Activated CD4-positive, alpha-beta memory T cell treated with anti-CD3 and anti-CD28 coated beads for 36 hours (primary cell): ENCODE measurements at regions of chr10 and their contacts with region 1.

Region 1: DNA sequence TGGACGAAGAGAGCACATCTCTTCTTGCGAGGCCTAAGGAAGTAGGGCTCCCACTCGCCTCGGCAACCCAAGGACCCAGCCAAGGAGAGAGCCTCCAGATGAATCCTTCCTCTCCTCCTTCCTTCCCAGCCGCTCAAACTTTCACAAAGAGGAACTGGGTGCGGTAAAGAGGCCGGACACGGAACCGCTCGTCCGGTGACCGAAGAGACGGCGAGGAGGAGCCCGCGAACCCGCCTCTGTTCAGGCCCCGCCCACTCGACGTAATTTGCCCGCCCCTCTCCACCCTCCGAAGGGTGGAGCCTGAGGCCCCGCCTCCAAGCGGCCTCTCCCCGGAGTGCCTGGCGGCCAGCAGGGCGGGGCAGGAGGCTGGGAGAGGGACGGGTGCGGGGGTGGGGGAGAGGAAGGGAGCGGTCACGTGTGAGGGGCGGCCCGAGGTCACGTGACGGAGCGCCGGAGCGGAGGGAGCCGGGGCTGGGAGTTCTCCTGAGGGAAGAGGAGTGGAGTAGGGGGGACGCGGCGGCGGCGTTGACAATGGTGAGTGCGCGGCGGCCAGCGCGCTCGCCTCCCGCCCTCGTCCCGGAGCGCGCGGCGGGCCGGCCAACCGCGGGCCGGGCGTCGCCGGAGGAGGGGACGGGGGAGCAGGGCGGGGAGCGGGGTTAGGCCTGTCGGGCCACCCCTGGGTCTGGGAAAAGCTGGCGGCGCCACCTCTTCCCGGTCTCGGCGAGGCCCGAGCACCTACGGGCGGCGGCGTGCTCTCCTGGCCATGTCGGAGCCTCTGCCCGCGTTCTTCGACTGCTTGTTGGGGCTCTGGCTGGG is at the start of gene VPS26A:
- DNase-seq: peak; percentile 99
- H3K4me3 Mint-ChIP-seq: peak within 1 kb of the TSS; percentile 88
- H3K27ac Mint-ChIP-seq: peak within 1 kb of the TSS; percentile 92
- H3K4me1 Mint-ChIP-seq: peaks cover 25% of the 10 kb centered on the region
- H3K27me3 Mint-ChIP-seq: no peaks in the 10 kb centered on the region
- total RNA-seq, gene VPS26A: 44.6 to 51.4 TPM

Region 2: GRCh38 chr10:68955832-68956532 is 168.0 kb before region 1 on chr10 and contains the start of gene DDX21:
- CTCF ChIA-PET with region 1: no interaction called
- POLR2A ChIA-PET with region 1: interaction called, 7 read pairs
- intact Hi-C with region 1: loop called (anchors 1 kb)
- DNase-seq: peak; percentile 94
- H3K4me3 Mint-ChIP-seq: peak within 1 kb of the TSS; percentile 97
- H3K27ac Mint-ChIP-seq: peak within 1 kb of the TSS; percentile 99
- H3K4me1 Mint-ChIP-seq: peaks cover 39% of the 10 kb centered on the region
- H3K27me3 Mint-ChIP-seq: no peaks in the 10 kb centered on the region
- total RNA-seq, gene DDX21: 156 to 158 TPM

Region 3: DNA sequence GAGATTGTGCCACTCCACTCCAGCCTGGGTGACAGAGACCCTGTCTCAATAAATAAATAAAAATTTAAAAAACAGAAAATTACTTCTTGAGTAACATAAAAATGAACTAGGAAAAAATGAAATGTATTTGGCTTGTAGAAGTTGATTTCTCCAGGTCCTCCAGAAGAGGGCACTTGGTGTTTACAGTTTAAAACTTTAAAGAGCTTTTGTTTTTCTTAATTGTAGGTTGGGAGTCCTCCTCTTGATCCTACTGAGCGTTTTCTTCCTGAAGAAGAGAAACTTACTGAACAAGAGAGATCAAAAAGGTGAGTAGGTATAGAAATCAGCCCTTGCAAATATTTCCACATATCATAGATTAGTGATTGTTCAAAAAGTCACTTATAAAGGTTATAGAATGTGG is 119.1 kb before region 1 on chr10:
- CTCF ChIA-PET with region 1: interaction called, 25 read pairs
- POLR2A ChIA-PET with region 1: interaction called, 4 read pairs
- intact Hi-C with region 1: loop called (anchors 1 kb)
- DNase-seq: no peak
- H3K4me3 Mint-ChIP-seq: no peak overlapping the region
- H3K27ac Mint-ChIP-seq: no peak overlapping the region
- H3K4me1 Mint-ChIP-seq: peaks cover 15% of the 10 kb centered on the region
- H3K27me3 Mint-ChIP-seq: no peaks in the 10 kb centered on the region

Region 4: GRCh38 chr10:69168493-69168892 is 44.5 kb after region 1 on chr10:
- CTCF ChIA-PET with region 1: no interaction called
- POLR2A ChIA-PET with region 1: no interaction called
- intact Hi-C with region 1: no loop called
- DNase-seq: no peak
- H3K4me3 Mint-ChIP-seq: no peak overlapping the region
- H3K27ac Mint-ChIP-seq: no peak overlapping the region
- H3K4me1 Mint-ChIP-seq: peaks cover 2% of the 10 kb centered on the region
- H3K27me3 Mint-ChIP-seq: no peaks in the 10 kb centered on the region

Region 5: GRCh38 chr10:69179743-69180524 is 56.0 kb after region 1 on chr10 and contains the start of gene SUPV3L1:
- CTCF ChIA-PET with region 1: no interaction called
- POLR2A ChIA-PET with region 1: no interaction called
- intact Hi-C with region 1: loop called (anchors 1 kb)
- DNase-seq: peak; percentile 91
- H3K4me3 Mint-ChIP-seq: peak within 1 kb of the TSS; percentile 87
- H3K27ac Mint-ChIP-seq: peak within 1 kb of the TSS; percentile 100
- H3K4me1 Mint-ChIP-seq: peaks cover 45% of the 10 kb centered on the region
- H3K27me3 Mint-ChIP-seq: no peaks in the 10 kb centered on the region
- total RNA-seq, gene SUPV3L1: 45.0 to 47.6 TPM

Region 6: DNA sequence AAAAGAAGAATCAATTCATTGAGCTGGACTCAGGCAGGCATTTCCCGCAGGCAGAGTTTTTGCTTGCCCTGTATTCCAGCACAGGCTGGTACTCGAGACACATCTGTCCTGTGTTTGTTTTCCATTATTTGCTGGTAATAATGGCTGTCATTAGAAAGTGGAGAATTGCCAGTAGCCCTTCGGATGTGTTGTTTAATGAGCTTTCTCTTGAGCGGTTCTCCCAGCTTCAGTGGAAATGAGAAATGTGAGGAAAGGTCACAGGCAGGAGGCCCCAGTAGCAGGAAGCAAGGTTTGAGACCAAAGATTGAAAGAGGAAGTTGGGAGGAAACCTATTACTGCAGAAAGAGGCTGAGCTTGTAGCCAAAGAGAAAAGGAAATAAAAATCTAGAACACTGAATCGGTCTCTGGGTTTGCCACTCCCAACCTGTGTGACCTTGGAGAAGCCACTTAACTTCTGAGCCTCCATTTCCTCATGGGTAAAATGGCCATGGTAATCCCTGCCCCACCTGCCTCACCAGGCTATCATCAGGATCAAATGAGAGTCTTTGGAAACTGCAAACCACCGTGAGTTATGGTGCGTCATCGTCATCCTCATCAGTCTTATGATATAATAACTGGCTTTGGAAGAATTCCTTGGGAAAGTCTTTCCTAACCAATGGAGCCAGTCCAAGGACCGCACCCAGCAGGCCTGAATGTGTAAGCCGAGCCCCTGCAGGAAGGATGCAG is 225.0 kb after region 1 on chr10:
- CTCF ChIA-PET with region 1: no interaction called
- POLR2A ChIA-PET with region 1: no interaction called
- intact Hi-C with region 1: no loop called
- DNase-seq: no peak
- H3K4me3 Mint-ChIP-seq: no peak overlapping the region
- H3K27ac Mint-ChIP-seq: peak overlapping the region; percentile 81
- H3K4me1 Mint-ChIP-seq: peaks cover 70% of the 10 kb centered on the region
- H3K27me3 Mint-ChIP-seq: no peaks in the 10 kb centered on the region

Region 7: DNA sequence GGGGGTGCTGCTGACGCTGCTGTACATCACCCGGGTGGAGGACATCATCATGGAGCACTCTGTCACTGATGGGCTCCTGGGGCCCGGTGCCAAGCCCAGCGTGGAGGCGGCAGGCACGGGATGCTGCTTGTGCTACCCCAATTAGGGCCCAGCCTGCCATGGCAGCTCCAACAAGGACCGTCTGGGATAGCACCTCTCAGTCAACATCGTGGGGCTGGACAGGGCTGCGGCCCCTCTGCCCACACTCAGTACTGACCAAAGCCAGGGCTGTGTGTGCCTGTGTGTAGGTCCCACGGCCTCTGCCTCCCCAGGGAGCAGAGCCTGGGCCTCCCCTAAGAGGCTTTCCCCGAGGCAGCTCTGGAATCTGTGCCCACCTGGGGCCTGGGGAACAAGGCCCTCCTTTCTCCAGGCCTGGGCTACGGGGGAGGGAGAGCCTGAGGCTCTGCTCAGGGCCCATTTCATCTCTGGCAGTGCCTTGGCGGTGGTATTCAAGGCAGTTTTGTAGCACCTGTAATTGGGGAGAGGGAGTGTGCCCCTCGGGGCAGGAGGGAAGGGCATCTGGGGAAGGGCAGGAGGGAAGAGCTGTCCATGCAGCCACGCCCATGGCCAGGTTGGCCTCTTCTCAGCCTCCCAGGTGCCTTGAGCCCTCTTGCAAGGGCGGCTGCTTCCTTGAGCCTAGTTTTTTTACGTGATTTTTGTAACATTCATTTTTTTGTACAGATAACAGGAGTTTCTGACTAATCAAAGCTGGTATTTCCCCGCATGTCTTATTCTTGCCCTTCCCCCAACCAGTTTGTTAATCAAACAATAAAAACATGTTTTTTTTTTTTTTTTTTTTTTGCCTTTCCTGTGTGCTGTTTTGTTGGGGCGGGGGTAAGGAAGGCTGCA is 383.1 kb after region 1 on chr10:
- CTCF ChIA-PET with region 1: no interaction called
- POLR2A ChIA-PET with region 1: no interaction called
- intact Hi-C with region 1: loop called (anchors 5 kb)
- DNase-seq: no peak
- H3K4me3 Mint-ChIP-seq: peak overlapping the region; percentile 54
- H3K27ac Mint-ChIP-seq: peak overlapping the region; percentile 64
- H3K4me1 Mint-ChIP-seq: peaks cover 10% of the 10 kb centered on the region
- H3K27me3 Mint-ChIP-seq: no peaks in the 10 kb centered on the region